GM12878 (cell line): ENCODE measurements at regions of chr15 and their contacts with region 1.

Region 1: GRCh38 chr15:25624504-25625177 is 185.8 kb upstream of the UBE3A start:
- DNase-seq: no peak
- ATAC-seq: no peak
- H3K4me3 ChIP-seq: no peak overlapping the region
- H3K27ac ChIP-seq: no peak overlapping the region
- H3K4me1 ChIP-seq: no peaks in the 10 kb centered on the region
- H3K27me3 ChIP-seq: no peaks in the 10 kb centered on the region
- CTCF ChIP-seq: no peak
- EP300 ChIP-seq: no peak
- POLR2A ChIP-seq: no peak
- RAD21 ChIP-seq: no peak

Region 2: DNA sequence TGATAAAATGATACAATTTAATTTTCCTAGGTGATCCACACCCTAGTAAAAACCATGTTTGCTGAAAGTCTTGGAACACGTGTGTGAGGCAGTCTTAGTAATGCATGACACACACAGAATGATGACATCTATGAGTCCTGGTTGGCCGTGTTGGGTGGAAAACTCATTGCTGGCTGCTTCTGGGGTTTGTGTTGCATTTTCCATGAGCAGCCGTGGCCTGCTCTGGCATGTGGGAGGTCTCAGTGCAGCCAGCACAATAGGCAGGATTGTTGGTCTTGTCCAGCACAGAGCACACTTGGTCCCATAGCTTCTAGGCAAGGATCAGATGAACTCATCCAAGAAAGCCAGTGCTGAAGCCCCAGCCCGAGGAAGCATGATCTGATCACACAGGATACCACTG is 13.0 kb before region 1 on chr15:
- CTCF ChIA-PET with region 1: no interaction called
- POLR2A ChIA-PET with region 1: no interaction called
- RAD21 ChIA-PET with region 1: no interaction called
- SMC1A ChIA-PET with region 1: no interaction called
- in situ Hi-C with region 1: no loop called
- intact Hi-C with region 1: no loop called
- DNase-seq: no peak
- ATAC-seq: no peak
- H3K4me3 ChIP-seq: no peak overlapping the region
- H3K27ac ChIP-seq: no peak overlapping the region
- H3K4me1 ChIP-seq: no peaks in the 10 kb centered on the region
- H3K27me3 ChIP-seq: no peaks in the 10 kb centered on the region
- CTCF ChIP-seq: no peak
- EP300 ChIP-seq: no peak
- POLR2A ChIP-seq: no peak
- RAD21 ChIP-seq: no peak

Region 3: DNA sequence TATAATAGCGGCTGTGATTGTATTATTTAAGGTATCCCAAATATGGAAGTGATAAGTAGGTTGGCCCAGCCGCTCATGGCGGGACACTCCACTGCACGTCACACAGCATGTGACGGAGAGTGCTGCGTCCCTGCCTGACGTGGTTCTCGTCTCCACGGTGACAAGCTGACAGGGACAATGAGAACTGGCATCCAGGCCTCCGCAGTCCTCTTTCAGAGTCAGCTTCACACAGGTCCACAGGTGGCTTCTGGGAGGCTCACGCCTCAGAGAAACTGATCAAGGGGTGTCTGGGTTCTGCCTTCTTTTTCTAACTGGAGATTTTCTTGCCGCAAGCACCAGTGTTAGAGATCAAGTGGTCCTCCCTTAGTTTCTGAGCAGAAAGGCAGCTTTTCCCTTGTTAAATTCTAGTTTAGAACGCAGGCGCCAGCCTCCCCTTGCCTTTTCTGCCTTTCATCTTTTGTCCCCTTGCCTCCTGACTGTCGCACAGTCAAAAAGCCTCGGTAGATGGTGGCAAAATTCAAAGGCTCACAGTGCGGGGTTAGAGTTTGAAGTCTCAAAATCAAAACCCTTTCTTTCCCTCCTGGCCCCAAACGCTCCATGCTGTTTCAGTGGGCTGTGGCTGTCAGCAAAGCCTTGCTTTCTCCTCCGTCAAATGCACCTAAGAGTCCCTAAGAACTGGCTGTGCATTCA is 117.5 kb after region 1 on chr15:
- CTCF ChIA-PET with region 1: no interaction called
- POLR2A ChIA-PET with region 1: no interaction called
- RAD21 ChIA-PET with region 1: no interaction called
- SMC1A ChIA-PET with region 1: no interaction called
- in situ Hi-C with region 1: no loop called
- intact Hi-C with region 1: no loop called
- DNase-seq: no peak
- ATAC-seq: no peak
- H3K4me3 ChIP-seq: no peak overlapping the region
- H3K27ac ChIP-seq: no peak overlapping the region
- H3K4me1 ChIP-seq: no peaks in the 10 kb centered on the region
- H3K27me3 ChIP-seq: no peaks in the 10 kb centered on the region
- CTCF ChIP-seq: no peak
- EP300 ChIP-seq: no peak
- POLR2A ChIP-seq: no peak
- RAD21 ChIP-seq: no peak

Region 4: DNA sequence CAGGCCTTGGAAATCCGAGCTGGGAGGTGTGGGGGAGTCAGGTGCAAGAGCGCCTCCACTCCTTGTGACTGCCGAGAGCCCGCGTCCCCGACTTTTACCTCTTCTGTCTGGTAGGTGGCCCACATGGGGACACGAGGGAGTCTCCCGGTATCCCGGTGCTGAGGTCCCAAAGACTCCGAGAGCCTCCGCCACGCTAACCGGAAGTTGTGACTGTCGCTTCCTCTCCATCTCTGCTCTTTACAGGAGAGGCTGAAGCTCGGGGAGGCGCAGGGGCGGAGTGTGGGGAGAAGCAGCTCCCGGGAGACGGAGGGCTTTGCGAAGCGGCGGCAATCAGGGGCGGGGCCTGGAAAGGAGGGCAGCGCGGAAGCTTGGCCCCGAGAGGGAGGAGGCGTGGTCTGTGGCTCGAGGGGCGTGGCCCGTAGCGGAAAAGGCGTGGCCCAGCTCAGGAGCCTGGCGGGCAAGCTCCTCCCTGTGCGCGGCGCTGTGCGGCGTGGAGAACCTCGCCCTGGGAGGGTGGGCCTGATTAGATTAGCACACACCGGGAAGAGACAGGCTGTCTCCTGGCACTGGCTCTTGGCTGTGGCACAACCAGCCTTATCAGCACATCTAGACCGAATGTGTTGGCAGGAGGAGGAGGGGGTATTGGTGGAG is 1004.4 kb after region 1 on chr15:
- CTCF ChIA-PET with region 1: no interaction called
- POLR2A ChIA-PET with region 1: no interaction called
- RAD21 ChIA-PET with region 1: no interaction called
- SMC1A ChIA-PET with region 1: no interaction called
- in situ Hi-C with region 1: loop called (anchors 25 kb)
- intact Hi-C with region 1: no loop called
- DNase-seq: no peak
- ATAC-seq: no peak
- H3K4me3 ChIP-seq: no peak overlapping the region
- H3K27ac ChIP-seq: no peak overlapping the region
- H3K4me1 ChIP-seq: no peaks in the 10 kb centered on the region
- H3K27me3 ChIP-seq: no peaks in the 10 kb centered on the region
- CTCF ChIP-seq: no peak
- EP300 ChIP-seq: no peak
- POLR2A ChIP-seq: no peak
- RAD21 ChIP-seq: no peak